ENCODE measurements at regions of chr10 and their contacts with region 1.

Region 1: DNA sequence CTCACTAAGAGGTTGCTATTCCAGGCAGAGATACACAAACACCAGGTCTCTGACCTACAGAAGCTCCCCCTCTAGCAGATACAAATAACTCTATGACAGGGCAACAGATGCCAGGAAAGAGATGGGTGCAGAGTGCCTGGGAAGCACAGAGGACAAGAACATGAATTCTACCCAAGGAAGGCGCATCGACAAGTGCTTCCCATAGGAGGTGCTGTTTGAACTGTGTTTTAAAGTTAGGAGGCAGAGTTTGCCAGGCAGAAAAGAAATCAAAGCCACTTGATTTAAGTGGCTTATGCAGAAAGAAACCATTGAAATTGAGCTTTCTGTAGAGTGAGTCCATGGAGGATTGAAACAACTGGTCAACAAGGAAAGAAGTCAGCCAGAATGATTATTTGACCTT is 35.3 kb upstream of the EGR2 start:
- DNase-seq: peak; percentile 68
- H3K4me3 Mint-ChIP-seq: no peak overlapping the region
- H3K27ac Mint-ChIP-seq: peak overlapping the region; percentile 3
- H3K4me1 Mint-ChIP-seq: peaks cover 52% of the 10 kb centered on the region
- H3K27me3 Mint-ChIP-seq: no peaks in the 10 kb centered on the region

Region 2: GRCh38 chr10:62528441-62528840 is 323.0 kb before region 1 on chr10:
- intact Hi-C with region 1: loop called (anchors 2 kb)
- DNase-seq: peak; percentile 65
- H3K4me3 Mint-ChIP-seq: peak overlapping the region; percentile 27
- H3K27ac Mint-ChIP-seq: peak overlapping the region; percentile 39
- H3K4me1 Mint-ChIP-seq: peaks cover 33% of the 10 kb centered on the region
- H3K27me3 Mint-ChIP-seq: peaks cover 11% of the 10 kb centered on the region

Region 3: DNA sequence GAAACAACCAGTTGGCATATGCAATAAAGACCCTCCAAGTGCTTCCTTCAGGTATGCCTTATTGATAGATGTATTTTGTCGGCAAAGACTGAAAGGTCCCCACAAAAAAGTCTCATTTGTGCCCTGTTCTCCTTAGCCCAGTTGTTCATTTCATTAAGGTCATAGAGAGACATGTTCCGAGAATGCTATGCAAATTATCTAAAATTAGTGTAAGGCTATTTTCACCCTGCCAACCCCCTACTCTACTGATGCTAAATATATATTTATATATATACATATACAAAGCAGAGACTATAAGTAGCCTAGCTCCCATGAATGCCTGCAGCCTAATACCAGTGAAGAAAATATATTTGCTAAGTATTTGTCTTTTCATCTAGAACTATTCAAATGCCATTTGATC is 143.6 kb before region 1 on chr10:
- intact Hi-C with region 1: no loop called
- DNase-seq: no peak
- H3K4me3 Mint-ChIP-seq: no peak overlapping the region
- H3K27ac Mint-ChIP-seq: no peak overlapping the region
- H3K4me1 Mint-ChIP-seq: peaks cover 12% of the 10 kb centered on the region
- H3K27me3 Mint-ChIP-seq: peaks cover 10% of the 10 kb centered on the region

Region 4: GRCh38 chr10:62769574-62770242 is 81.7 kb before region 1 on chr10:
- intact Hi-C with region 1: no loop called
- DNase-seq: no peak
- H3K4me3 Mint-ChIP-seq: no peak overlapping the region
- H3K27ac Mint-ChIP-seq: no peak overlapping the region
- H3K4me1 Mint-ChIP-seq: peaks cover 17% of the 10 kb centered on the region
- H3K27me3 Mint-ChIP-seq: peaks cover 12% of the 10 kb centered on the region

Region 5: GRCh38 chr10:62839590-62839989 is 11.9 kb before region 1 on chr10:
- intact Hi-C with region 1: loop called (anchors 1 kb)
- DNase-seq: no peak
- H3K4me3 Mint-ChIP-seq: no peak overlapping the region
- H3K27ac Mint-ChIP-seq: peak overlapping the region; percentile 60
- H3K4me1 Mint-ChIP-seq: peaks cover 13% of the 10 kb centered on the region
- H3K27me3 Mint-ChIP-seq: peaks cover 27% of the 10 kb centered on the region

Region 6: GRCh38 chr10:62866451-62866850 is 15.0 kb after region 1 on chr10:
- intact Hi-C with region 1: no loop called
- DNase-seq: no peak
- H3K4me3 Mint-ChIP-seq: no peak overlapping the region
- H3K27ac Mint-ChIP-seq: no peak overlapping the region
- H3K4me1 Mint-ChIP-seq: peaks cover 26% of the 10 kb centered on the region
- H3K27me3 Mint-ChIP-seq: peaks cover 11% of the 10 kb centered on the region

Region 7: GRCh38 chr10:63068246-63068645 is 216.8 kb after region 1 on chr10:
- intact Hi-C with region 1: loop called (anchors 1 kb)
- DNase-seq: peak; percentile 70
- H3K4me3 Mint-ChIP-seq: peak overlapping the region; percentile 49
- H3K27ac Mint-ChIP-seq: peak overlapping the region; percentile 34
- H3K4me1 Mint-ChIP-seq: peaks cover 38% of the 10 kb centered on the region
- H3K27me3 Mint-ChIP-seq: peaks cover 15% of the 10 kb centered on the region

Region 8: GRCh38 chr10:63083904-63084689 is 232.7 kb after region 1 on chr10:
- intact Hi-C with region 1: loop called (anchors 2 kb)
- DNase-seq: peak; percentile 79
- H3K4me3 Mint-ChIP-seq: no peak overlapping the region
- H3K27ac Mint-ChIP-seq: no peak overlapping the region
- H3K4me1 Mint-ChIP-seq: no peaks in the 10 kb centered on the region
- H3K27me3 Mint-ChIP-seq: peaks cover 33% of the 10 kb centered on the region

Region 9: DNA sequence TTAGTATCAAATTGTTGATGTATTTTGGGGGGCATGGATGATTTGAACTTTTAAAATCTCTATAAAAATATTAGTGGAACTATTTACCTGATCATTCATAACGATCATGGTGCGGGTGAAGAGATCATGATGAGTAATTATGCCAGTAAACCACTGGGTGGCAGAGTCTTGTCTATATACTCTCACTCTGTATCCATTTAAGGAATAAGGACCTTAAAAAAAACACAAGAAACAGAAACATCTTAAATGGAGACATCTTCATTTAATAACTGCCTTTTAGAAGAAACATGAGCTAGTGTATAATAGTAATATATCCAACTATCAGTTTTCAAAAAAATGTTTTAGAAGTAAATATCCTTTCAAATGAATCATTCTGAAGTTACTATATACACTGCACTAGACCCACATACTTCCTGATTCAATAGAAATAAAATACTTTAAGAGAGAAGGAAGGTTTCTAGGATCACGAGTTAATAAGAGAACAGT is 365.7 kb after region 1 on chr10:
- intact Hi-C with region 1: no loop called
- DNase-seq: peak; percentile 75
- H3K4me3 Mint-ChIP-seq: peak overlapping the region; percentile 15
- H3K27ac Mint-ChIP-seq: no peak overlapping the region
- H3K4me1 Mint-ChIP-seq: peaks cover 46% of the 10 kb centered on the region
- H3K27me3 Mint-ChIP-seq: no peaks in the 10 kb centered on the region

Measured in activated CD4-positive, alpha-beta T cell treated with anti-CD3 and anti-CD28 coated beads, Interleukin-2, amount 10 ng/mL, durations not matched to agents 24 days and 14 days (primary cell).